ENCODE measurements at regions of chr1 and their contacts with region 1.

Region 1: GRCh38 chr1:212749821-212750535 is 41.6 kb downstream of the NSL1 start:
- DNase-seq: no peak
- ATAC-seq: no peak
- H3K4me3 Mint-ChIP-seq: no peak overlapping the region
- H3K27ac Mint-ChIP-seq: peak overlapping the region; percentile 74
- H3K4me1 Mint-ChIP-seq: peaks cover 55% of the 10 kb centered on the region
- H3K27me3 Mint-ChIP-seq: no peaks in the 10 kb centered on the region

Region 2: DNA sequence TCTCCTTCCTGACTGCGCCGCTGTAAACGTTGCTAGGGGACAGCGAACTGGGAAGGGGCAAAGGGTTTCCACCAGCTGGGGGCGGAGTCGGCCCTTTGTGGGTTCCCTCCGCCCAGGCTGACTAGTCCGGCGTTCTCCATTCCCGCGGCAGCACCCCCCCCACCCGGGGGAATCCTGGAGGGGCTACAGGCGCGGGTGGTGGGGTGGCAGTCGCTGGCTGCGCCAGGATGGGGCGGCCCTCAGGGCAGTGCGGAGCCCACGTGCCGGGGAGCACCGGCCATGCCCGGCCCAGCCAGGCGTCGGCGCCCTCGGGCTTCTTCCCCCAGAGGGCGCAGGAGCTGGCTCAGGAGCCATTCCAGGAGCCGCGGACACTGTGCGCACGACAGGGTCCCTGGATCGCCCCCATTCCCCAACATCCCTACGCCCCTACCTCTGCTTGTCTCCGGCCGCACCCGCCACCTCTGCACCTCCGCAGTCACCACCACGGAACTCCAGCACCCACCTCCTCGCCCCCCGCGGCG is 50.8 kb before region 1 on chr1:
- CTCF ChIA-PET with region 1: interaction called, 30 read pairs
- DNase-seq: peak; percentile 78
- ATAC-seq: peak; percentile 77
- H3K4me3 Mint-ChIP-seq: peak overlapping the region; percentile 83
- H3K27ac Mint-ChIP-seq: peak overlapping the region; percentile 92
- H3K4me1 Mint-ChIP-seq: peaks cover 75% of the 10 kb centered on the region
- H3K27me3 Mint-ChIP-seq: no peaks in the 10 kb centered on the region

Region 3: GRCh38 chr1:212721388-212722247 is 28.4 kb before region 1 on chr1:
- CTCF ChIA-PET with region 1: interaction called, 28 read pairs
- DNase-seq: peak; percentile 81
- ATAC-seq: peak; percentile 85
- H3K4me3 Mint-ChIP-seq: peak overlapping the region; percentile 42
- H3K27ac Mint-ChIP-seq: peak overlapping the region; percentile 84
- H3K4me1 Mint-ChIP-seq: peaks cover 70% of the 10 kb centered on the region
- H3K27me3 Mint-ChIP-seq: no peaks in the 10 kb centered on the region

Region 4: GRCh38 chr1:212727386-212728181 is 22.4 kb before region 1 on chr1:
- CTCF ChIA-PET with region 1: interaction called, 28 read pairs
- DNase-seq: peak; percentile 82
- ATAC-seq: peak; percentile 82
- H3K4me3 Mint-ChIP-seq: no peak overlapping the region
- H3K27ac Mint-ChIP-seq: peak overlapping the region; percentile 81
- H3K4me1 Mint-ChIP-seq: peaks cover 69% of the 10 kb centered on the region
- H3K27me3 Mint-ChIP-seq: no peaks in the 10 kb centered on the region

Region 5: GRCh38 chr1:212738330-212738729 is 11.6 kb before region 1 on chr1:
- CTCF ChIA-PET with region 1: interaction called, 60 read pairs
- DNase-seq: no peak
- ATAC-seq: peak; percentile 83
- H3K4me3 Mint-ChIP-seq: peak overlapping the region; percentile 56
- H3K27ac Mint-ChIP-seq: peak overlapping the region; percentile 97
- H3K4me1 Mint-ChIP-seq: peaks cover 42% of the 10 kb centered on the region
- H3K27me3 Mint-ChIP-seq: no peaks in the 10 kb centered on the region

Region 6: GRCh38 chr1:212760126-212760823 is 10.3 kb after region 1 on chr1:
- CTCF ChIA-PET with region 1: interaction called, 20 read pairs
- DNase-seq: peak; percentile 80
- ATAC-seq: peak; percentile 94
- H3K4me3 Mint-ChIP-seq: no peak overlapping the region
- H3K27ac Mint-ChIP-seq: no peak overlapping the region
- H3K4me1 Mint-ChIP-seq: peaks cover 31% of the 10 kb centered on the region
- H3K27me3 Mint-ChIP-seq: no peaks in the 10 kb centered on the region

Region 7: GRCh38 chr1:212782422-212783154 is 32.6 kb after region 1 on chr1:
- CTCF ChIA-PET with region 1: interaction called, 18 read pairs
- DNase-seq: no peak
- ATAC-seq: peak; percentile 60
- H3K4me3 Mint-ChIP-seq: no peak overlapping the region
- H3K27ac Mint-ChIP-seq: no peak overlapping the region
- H3K4me1 Mint-ChIP-seq: peaks cover 36% of the 10 kb centered on the region
- H3K27me3 Mint-ChIP-seq: no peaks in the 10 kb centered on the region